ENCODE measurements at regions of chr1 and their contacts with region 1.

Region 1: GRCh38 chr1:231584921-231585320 is 41.7 kb upstream of the DISC1 start:
- DNase-seq: no peak
- H3K4me3 ChIP-seq: no peak overlapping the region
- H3K27ac ChIP-seq: no peak overlapping the region
- H3K4me1 ChIP-seq: no peaks in the 10 kb centered on the region
- H3K27me3 ChIP-seq: no peaks in the 10 kb centered on the region
- CTCF ChIP-seq: no peak
- EP300 ChIP-seq: no peak
- POLR2A ChIP-seq: no peak

Region 2: GRCh38 chr1:231364192-231364591 is 220.7 kb before region 1 on chr1:
- intact Hi-C with region 1: loop called in 2 of 4 experiments (anchors 5 kb)
- DNase-seq: no peak
- H3K4me3 ChIP-seq: no peak overlapping the region
- H3K27ac ChIP-seq: no peak overlapping the region
- H3K4me1 ChIP-seq: no peaks in the 10 kb centered on the region
- H3K27me3 ChIP-seq: no peaks in the 10 kb centered on the region
- CTCF ChIP-seq: no peak
- EP300 ChIP-seq: no peak
- POLR2A ChIP-seq: no peak

Region 3: GRCh38 chr1:231636157-231636556 is 51.2 kb after region 1 on chr1:
- intact Hi-C with region 1: no loop called
- DNase-seq: peak in 4 of 5 donors; percentile 37 to 44 (median 39)
- H3K4me3 ChIP-seq: no peak overlapping the region
- H3K27ac ChIP-seq: no peak overlapping the region
- H3K4me1 ChIP-seq: peaks cover 3% of the 10 kb centered on the region
- H3K27me3 ChIP-seq: no peaks in the 10 kb centered on the region
- CTCF ChIP-seq: no peak
- EP300 ChIP-seq: no peak
- POLR2A ChIP-seq: no peak